Activated T-helper 2 cell treated with anti-CD3 and anti-CD28 coated beads, Interferon-gamma antibody, Interleukin-2, Interleukin-4, amounts not matched to agents 10 μg/mL and 5 μg/mL and 100 μg/mL, durations not matched to agents 14 hours and 24 hours and 36 hours (primary cell): ENCODE measurements at regions of chr14 and their contacts with region 1.

Region 1: DNA sequence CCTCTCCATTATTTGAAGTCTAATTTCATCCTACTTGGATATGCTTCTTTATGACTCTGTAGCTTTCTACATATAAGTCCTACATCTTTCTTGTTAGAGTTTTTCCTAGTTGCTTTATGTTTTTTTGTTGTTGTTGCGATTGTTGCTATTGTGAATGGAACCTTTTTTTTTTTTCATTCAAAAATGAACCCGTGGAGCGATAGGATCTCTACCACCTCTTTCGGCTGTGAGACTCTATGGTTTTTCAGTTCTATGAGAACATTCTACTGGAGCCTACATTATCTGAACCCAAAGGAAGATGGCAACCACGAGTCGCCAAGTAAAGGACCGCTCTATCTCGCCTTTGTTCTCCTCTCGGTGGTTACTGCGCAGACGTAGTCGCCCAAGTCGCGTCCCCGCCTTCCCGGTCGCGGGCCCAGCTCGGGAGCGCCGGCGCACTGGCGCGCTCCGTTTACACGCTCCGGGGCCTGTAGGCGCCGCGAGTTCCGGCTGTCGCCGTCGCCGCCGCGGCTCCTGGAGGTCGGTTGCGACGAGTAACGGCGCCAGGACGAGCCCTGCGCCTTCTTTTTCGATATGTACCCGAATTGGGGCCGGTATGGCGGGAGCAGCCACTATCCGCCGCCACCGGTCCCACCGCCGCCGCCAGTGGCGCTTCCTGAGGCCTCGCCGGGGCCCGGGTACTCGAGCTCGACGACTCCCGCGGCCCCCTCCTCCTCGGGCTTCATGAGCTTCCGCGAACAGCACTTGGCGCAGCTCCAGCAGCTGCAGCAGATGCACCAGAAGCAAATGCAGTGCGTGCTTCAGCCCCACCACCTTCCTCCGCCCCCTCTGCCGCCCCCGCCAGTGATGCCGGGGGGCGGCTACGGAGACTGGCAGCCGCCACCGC is at the start of gene YLPM1:
- DNase-seq: peak; percentile 93
- H3K4me3 Mint-ChIP-seq: peak within 1 kb of the TSS; percentile 100
- H3K27ac Mint-ChIP-seq: peak within 1 kb of the TSS; percentile 98
- H3K4me1 Mint-ChIP-seq: peaks cover 42% of the 10 kb centered on the region
- H3K27me3 Mint-ChIP-seq: no peaks in the 10 kb centered on the region
- total RNA-seq, gene YLPM1: 71.7 and 75.1 TPM in 2 replicates

Region 2: DNA sequence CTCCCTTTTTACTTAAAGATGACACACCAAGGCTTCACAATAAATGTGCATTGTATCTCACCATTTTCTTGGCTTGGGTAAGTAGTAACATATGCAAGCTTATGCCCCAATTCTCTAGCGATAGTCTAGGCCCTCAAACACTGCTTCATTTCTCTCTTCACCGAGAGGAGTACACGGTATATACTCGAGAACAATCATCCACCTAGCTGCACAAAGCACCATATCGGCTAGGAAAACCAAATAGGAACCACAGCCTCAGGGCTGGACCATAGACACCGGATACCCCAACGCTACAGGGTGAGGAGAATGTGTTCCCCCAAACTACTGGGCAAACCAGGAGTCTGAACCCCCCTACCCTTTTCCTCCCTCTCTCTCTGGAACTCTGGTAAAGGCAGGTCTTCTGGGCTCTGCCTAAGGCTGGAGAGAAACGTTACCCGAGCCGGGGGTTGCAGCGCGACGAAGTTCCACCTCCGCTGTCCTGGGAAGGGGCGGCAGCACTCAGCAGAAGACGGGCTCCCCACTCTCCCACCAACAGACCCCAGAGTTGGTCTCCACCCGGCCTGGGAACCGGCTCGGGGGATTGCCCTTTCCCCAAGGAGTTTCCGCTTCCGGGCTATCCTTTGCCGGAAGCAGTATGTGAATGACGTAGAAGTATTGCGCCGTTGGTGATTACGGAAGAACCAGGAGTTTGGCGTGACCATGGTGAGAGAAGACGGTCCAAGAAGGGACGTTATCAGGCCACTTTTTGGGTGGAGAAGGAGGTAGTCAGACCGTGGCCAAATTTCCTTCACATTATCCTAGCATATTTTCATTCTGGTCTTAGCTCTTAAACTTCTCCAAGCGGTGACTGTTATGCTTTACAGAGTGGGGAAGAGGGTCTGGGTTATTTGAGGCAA is 50.4 kb before region 1 on chr14 and contains the starts of genes AREL1 and FCF1:
- intact Hi-C with region 1: loop called (anchors 1 kb)
- DNase-seq: peak; percentile 80
- H3K4me3 Mint-ChIP-seq: peak within 1 kb of the TSS; percentile 98
- H3K27ac Mint-ChIP-seq: peak within 1 kb of the TSS; percentile 97
- H3K4me1 Mint-ChIP-seq: peaks cover 27% of the 10 kb centered on the region
- H3K27me3 Mint-ChIP-seq: no peaks in the 10 kb centered on the region
- total RNA-seq, gene AREL1: 40.0 and 46.9 TPM in 2 replicates
- total RNA-seq, gene FCF1: 61.8 and 62.8 TPM in 2 replicates

Region 3: DNA sequence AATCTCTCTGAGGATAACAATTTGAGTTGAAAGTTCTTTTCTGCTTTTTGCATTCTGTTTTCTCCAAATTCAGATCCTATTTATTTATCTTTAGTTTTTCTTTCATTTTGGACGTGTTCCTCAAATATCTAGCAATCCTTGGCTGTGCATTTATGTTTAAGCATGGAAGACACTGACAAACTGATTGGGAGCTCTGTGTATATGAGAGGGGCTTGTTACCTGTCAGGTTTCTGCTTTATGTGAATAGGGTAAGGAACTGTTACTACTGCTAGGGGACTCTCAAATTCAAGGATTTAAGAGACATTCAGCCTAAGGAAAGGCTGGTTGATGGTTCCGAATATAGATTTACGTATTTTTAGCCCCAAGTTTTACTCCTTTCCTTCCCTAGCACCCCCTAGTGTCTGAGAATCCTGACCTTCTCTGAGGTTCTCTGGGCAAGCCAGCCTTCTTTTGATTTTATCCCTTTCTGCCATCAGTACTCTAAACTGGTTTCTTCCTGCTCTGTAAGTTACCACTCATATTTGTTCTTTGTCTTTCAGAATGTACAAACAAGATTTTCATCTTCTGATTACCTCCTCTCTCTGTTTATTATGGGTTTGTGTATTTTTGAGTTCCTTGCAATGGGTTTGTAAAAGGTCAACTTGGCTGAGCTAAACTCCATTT is 30.5 kb after region 1 on chr14:
- intact Hi-C with region 1: loop called (anchors 2 kb)
- DNase-seq: no peak
- H3K4me3 Mint-ChIP-seq: peak overlapping the region; percentile 63
- H3K27ac Mint-ChIP-seq: peak overlapping the region; percentile 79
- H3K4me1 Mint-ChIP-seq: peaks cover 39% of the 10 kb centered on the region
- H3K27me3 Mint-ChIP-seq: no peaks in the 10 kb centered on the region

Region 4: GRCh38 chr14:74836251-74836960 is 73.2 kb after region 1 on chr14:
- intact Hi-C with region 1: loop called (anchors 2 kb)
- DNase-seq: no peak
- H3K4me3 Mint-ChIP-seq: peak overlapping the region; percentile 37
- H3K27ac Mint-ChIP-seq: peak overlapping the region; percentile 78
- H3K4me1 Mint-ChIP-seq: peaks cover 50% of the 10 kb centered on the region
- H3K27me3 Mint-ChIP-seq: no peaks in the 10 kb centered on the region

Region 5: DNA sequence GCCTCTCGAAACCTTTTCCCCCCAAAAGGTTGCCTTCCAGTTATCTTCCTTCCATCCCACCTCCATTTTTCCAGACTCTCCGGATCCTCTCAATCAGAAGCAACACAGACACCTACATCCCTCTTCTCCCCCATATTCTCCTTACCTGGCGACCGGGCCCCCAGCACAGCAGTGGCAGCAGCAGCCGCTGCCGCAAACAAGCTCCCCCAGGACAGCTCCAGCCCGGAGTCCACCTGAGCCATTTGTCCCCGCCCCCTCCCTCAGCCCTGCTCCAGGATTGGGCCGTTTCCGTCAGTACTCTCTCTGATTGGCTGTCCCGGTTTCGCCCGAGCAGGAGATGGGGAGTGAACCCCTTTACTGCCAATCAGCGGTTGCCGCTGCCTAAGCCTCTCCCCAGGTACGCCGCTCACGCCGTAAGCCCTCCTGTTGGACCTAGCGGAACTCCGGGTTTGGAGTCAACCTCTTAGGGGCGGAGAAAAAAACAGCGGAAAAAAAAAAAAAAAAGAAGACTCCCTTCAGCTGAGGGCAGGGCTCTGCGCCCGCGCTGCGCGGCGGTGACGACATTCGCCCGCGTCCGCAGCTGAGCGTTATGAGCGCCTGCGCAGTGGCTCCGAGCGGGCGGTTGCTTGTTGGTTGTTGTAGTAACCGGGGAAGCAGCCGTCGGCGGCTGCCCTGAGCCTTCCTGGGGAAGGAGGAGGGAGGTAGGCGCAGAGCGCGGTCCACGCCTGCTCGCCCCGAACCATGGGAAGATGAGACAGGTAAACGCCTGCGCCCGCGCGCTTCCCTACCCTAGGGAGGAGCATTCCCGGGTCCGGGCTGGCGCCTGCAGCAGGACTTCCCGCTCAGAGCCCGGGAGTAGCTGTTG is 897.7 kb after region 1 on chr14 and contains the starts of genes ERG28 and TTLL5:
- intact Hi-C with region 1: loop called (anchors 10 kb)
- DNase-seq: peak; percentile 98
- H3K4me3 Mint-ChIP-seq: peak within 1 kb of the TSS; percentile 98
- H3K27ac Mint-ChIP-seq: peak within 1 kb of the TSS; percentile 93
- H3K4me1 Mint-ChIP-seq: peaks cover 29% of the 10 kb centered on the region
- H3K27me3 Mint-ChIP-seq: no peaks in the 10 kb centered on the region
- total RNA-seq, gene ERG28: 20.3 and 21.6 TPM in 2 replicates
- total RNA-seq, gene TTLL5: 28.8 and 29.6 TPM in 2 replicates